Endothelial cell of umbilical vein (primary cell): ENCODE measurements at regions of chr6 and their contacts with region 1.

Region 1: GRCh38 chr6:161168281-161168891 is 105.5 kb downstream of the AGPAT4 start:
- DNase-seq: peak; percentile 84
- H3K4me3 ChIP-seq: no peak overlapping the region
- H3K27ac ChIP-seq: peak overlapping the region; percentile 43
- H3K4me1 ChIP-seq: peaks cover 15% of the 10 kb centered on the region
- H3K27me3 ChIP-seq: no peaks in the 10 kb centered on the region
- CTCF ChIP-seq: no peak
- POLR2A ChIP-seq: no peak

Region 2: GRCh38 chr6:160431791-160432404 is 736.5 kb before region 1 on chr6:
- CTCF ChIA-PET with region 1: no interaction called
- POLR2A ChIA-PET with region 1: no interaction called
- dilution Hi-C with region 1: no loop called
- intact Hi-C with region 1: no loop called
- DNase-seq: no peak
- H3K4me3 ChIP-seq: no peak overlapping the region
- H3K27ac ChIP-seq: no peak overlapping the region
- H3K4me1 ChIP-seq: no peaks in the 10 kb centered on the region
- H3K27me3 ChIP-seq: no peaks in the 10 kb centered on the region
- CTCF ChIP-seq: no peak
- POLR2A ChIP-seq: no peak

Region 3: DNA sequence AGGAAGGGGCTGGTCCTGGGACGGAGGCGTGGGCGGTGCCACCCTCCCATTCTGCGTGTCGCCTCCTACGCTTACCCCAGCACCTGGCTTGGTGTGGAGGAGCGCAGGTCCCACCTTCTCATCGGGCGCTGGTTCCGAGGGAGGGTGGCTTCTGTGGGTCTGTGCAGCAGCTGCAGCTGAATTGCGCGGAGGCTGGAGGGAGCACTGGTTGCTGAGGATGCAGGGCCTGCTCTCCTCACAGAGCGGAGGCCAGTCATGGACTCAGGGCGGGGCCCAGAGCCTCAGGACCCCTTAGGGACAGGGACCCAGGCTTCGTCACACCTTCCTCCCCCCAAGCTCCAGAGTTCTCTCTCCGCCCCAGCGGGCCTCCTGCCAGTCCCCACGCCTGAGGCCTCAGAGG is 304.6 kb before region 1 on chr6:
- CTCF ChIA-PET with region 1: no interaction called
- POLR2A ChIA-PET with region 1: no interaction called
- dilution Hi-C with region 1: no loop called
- intact Hi-C with region 1: no loop called
- DNase-seq: no peak
- H3K4me3 ChIP-seq: no peak overlapping the region
- H3K27ac ChIP-seq: no peak overlapping the region
- H3K4me1 ChIP-seq: no peaks in the 10 kb centered on the region
- H3K27me3 ChIP-seq: no peaks in the 10 kb centered on the region
- CTCF ChIP-seq: no peak
- POLR2A ChIP-seq: no peak

Region 4: GRCh38 chr6:160972111-160972510 is 196.3 kb before region 1 on chr6:
- CTCF ChIA-PET with region 1: no interaction called
- POLR2A ChIA-PET with region 1: no interaction called
- dilution Hi-C with region 1: no loop called
- intact Hi-C with region 1: no loop called
- DNase-seq: no peak
- H3K4me3 ChIP-seq: no peak overlapping the region
- H3K27ac ChIP-seq: no peak overlapping the region
- H3K4me1 ChIP-seq: no peaks in the 10 kb centered on the region
- H3K27me3 ChIP-seq: peaks cover 0 to 5% of the 10 kb centered on the region in 2 experiments
- CTCF ChIP-seq: no peak
- POLR2A ChIP-seq: no peak

Region 5: DNA sequence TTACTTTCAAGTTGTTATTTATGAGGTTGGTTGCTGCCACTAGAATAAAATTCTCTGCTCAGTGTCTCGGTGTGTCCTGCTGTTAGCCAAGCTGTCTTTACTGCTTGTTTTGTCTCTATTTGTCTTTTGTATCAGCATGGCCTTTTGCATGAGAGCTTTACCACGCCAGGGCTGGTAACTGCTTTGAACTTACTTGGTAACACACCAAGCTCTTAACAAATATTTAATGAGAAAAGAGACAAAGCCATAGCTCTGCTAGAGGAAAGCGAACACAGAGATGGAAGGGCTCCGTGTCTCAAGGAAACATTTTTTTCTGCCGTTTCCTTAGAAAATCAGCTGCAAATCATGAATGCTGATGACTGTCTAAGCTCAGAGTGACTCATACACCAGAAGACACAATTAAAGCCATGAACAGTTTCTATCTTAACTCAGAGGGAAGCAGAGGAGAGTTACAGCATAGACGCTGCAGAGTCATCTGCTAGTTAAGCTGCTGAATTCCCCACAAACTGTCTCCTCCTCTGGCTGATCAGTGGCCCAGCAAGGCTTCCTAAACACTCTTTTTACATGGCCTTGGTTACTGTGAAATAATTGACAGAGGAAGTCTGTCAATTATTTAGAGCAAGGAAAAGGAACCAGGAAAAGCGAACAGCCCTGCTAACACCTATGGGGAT is 60.7 kb after region 1 on chr6:
- CTCF ChIA-PET with region 1: interaction called, 4 read pairs
- POLR2A ChIA-PET with region 1: no interaction called
- dilution Hi-C with region 1: no loop called
- intact Hi-C with region 1: loop called (anchors 2 kb)
- DNase-seq: peak; percentile 87
- H3K4me3 ChIP-seq: peak overlapping the region in 1 of 3 experiments; percentile 14
- H3K27ac ChIP-seq: peak overlapping the region; percentile 62
- H3K4me1 ChIP-seq: peaks cover 26% of the 10 kb centered on the region
- H3K27me3 ChIP-seq: no peaks in the 10 kb centered on the region
- CTCF ChIP-seq: no peak
- POLR2A ChIP-seq: no peak